Heart left ventricle (tissue), 16 donors: ENCODE measurements at regions of chr21 and their contacts with region 1.

Region 1: DNA sequence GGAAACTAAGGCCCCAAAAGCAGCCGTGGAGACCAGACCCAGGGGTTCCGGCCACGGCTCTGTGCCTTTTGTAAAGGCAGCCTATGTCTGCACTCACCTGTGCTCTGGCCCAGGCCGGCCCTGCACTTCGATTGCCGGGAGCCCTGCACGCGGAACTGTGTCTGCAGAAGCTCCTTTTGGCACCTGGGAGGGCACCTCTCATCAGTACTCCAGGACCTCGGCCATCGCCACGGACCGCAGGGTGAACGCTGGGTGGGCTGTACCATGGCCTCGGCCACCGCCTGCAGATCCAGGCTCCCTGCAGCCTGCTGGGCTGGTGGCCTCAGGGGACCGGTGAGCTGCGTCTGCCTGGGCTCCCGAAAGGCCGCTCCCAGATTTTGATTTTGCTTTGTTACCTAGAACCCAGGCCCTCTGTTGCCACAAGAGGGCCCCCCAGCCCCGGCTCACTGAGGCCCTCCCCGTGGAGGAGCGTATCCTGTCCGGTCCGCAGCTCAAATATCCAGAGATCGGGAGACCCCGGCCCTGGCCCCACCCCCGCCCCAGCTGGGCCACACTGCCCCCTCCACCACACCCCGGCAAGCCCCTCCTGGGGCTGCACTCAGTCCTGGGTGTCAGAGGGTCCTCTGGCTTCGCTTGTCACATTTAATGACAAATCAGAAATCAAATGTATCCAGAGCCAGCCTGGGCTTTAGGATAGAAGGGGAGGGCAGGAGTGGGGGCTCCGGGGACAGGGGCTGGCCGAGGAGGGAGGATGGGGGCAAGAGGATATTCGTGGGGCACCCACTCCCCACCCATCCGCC is 60.2 kb upstream of the PDE9A start:
- DNase-seq: peak; percentile 63 to 83 (median 67)
- ATAC-seq: peak; percentile 61 to 93 (median 92)
- H3K4me3 ChIP-seq: no peak overlapping the region
- H3K27ac ChIP-seq: no peak overlapping the region
- H3K4me1 ChIP-seq: peaks cover 0 to 7% (median 4%) of the 10 kb centered on the region in 12 donors
- H3K27me3 ChIP-seq: peaks cover 0 to 21% (median 0%) of the 10 kb centered on the region in 9 donors
- CTCF ChIP-seq: peak; percentile 72 to 89 (median 82)
- POLR2A ChIP-seq: no peak

Region 2: DNA sequence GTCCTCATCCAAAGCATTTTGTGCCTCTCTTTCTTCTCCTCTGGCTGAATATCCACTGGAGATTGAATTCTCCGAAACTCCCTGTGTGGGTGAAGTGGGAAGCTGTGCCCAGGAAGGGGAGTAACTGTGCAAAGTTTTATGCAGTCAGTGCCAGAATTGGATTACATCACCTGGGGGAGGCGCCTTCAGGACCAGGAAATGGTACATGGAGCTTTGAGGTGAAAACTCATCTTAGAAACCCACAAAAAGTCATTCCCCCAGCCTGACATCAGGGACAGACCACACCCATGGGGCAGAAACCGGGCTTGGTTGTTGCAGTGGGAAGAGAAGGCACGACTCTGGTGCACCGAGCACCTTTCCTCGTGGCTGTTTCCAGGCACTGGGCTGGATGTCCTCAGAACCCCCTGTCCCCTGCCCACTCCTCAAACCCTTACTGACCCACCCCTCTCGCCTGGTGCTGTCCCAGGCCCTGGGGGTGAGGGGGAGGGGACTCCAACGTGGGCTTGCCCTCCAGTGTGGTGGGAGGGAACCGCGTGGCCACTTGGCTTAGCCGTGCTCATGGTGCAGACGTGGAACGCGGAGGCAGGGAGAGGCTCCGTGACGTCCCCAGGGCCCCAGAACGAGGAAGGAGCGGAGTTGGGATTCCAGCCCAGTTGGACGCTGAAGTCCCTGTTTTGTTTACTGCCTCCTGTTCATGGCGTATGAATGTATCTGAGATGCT is 293.7 kb before region 1 on chr21:
- intact Hi-C with region 1: no loop called
- DNase-seq: peak in 4 of 5 donors; percentile 34 to 67 (median 49)
- ATAC-seq: peak in 3 of 4 donors; percentile 25 to 78 (median 41)
- H3K4me3 ChIP-seq: no peak overlapping the region
- H3K27ac ChIP-seq: peak overlapping the region in 11 of 12 donors; percentile 31 to 90 (median 62)
- H3K4me1 ChIP-seq: peaks cover 0 to 41% (median 19%) of the 10 kb centered on the region in 12 donors
- H3K27me3 ChIP-seq: no peaks in the 10 kb centered on the region
- CTCF ChIP-seq: no peak
- POLR2A ChIP-seq: no peak

Region 3: GRCh38 chr21:42641311-42642218 is 48.4 kb after region 1 on chr21:
- intact Hi-C with region 1: loop called in 2 of 10 experiments (anchors 10 kb)
- DNase-seq: peak in 2 of 5 donors; percentile 27 to 54
- ATAC-seq: peak in 1 of 4 donors; percentile 27
- H3K4me3 ChIP-seq: peak overlapping the region in 1 of 12 donors; percentile 4
- H3K27ac ChIP-seq: no peak overlapping the region
- H3K4me1 ChIP-seq: peaks cover 0 to 12% (median 3%) of the 10 kb centered on the region in 12 donors
- H3K27me3 ChIP-seq: peaks cover 0 to 50% (median 7%) of the 10 kb centered on the region in 9 donors
- CTCF ChIP-seq: no peak
- POLR2A ChIP-seq: no peak

Region 4: GRCh38 chr21:42818328-42818749 is 225.1 kb after region 1 on chr21:
- intact Hi-C with region 1: loop called (anchors 1 to 5 kb)
- DNase-seq: peak; percentile 37 to 84 (median 60)
- ATAC-seq: peak in 3 of 4 donors; percentile 67 to 87 (median 85)
- H3K4me3 ChIP-seq: no peak overlapping the region
- H3K27ac ChIP-seq: no peak overlapping the region
- H3K4me1 ChIP-seq: no peaks in the 10 kb centered on the region
- H3K27me3 ChIP-seq: peaks cover 0 to 10% (median 0%) of the 10 kb centered on the region in 9 donors
- CTCF ChIP-seq: peak; percentile 76 to 94 (median 87)
- POLR2A ChIP-seq: no peak

Region 5: GRCh38 chr21:42833439-42833815 is 240.2 kb after region 1 on chr21:
- intact Hi-C with region 1: loop called in 1 of 10 experiments (anchors 5 kb)
- DNase-seq: peak in 1 of 5 donors; percentile 16
- ATAC-seq: peak in 1 of 4 donors; percentile 35
- H3K4me3 ChIP-seq: no peak overlapping the region
- H3K27ac ChIP-seq: no peak overlapping the region
- H3K4me1 ChIP-seq: peaks cover 0 to 6% (median 0%) of the 10 kb centered on the region in 12 donors
- H3K27me3 ChIP-seq: peaks cover 5 to 46% (median 27%) of the 10 kb centered on the region in 9 donors
- CTCF ChIP-seq: peak in 3 of 12 donors; percentile 10 to 46 (median 11)
- POLR2A ChIP-seq: no peak